ENCODE measurements at regions of chr3 and their contacts with region 1.

Region 1: DNA sequence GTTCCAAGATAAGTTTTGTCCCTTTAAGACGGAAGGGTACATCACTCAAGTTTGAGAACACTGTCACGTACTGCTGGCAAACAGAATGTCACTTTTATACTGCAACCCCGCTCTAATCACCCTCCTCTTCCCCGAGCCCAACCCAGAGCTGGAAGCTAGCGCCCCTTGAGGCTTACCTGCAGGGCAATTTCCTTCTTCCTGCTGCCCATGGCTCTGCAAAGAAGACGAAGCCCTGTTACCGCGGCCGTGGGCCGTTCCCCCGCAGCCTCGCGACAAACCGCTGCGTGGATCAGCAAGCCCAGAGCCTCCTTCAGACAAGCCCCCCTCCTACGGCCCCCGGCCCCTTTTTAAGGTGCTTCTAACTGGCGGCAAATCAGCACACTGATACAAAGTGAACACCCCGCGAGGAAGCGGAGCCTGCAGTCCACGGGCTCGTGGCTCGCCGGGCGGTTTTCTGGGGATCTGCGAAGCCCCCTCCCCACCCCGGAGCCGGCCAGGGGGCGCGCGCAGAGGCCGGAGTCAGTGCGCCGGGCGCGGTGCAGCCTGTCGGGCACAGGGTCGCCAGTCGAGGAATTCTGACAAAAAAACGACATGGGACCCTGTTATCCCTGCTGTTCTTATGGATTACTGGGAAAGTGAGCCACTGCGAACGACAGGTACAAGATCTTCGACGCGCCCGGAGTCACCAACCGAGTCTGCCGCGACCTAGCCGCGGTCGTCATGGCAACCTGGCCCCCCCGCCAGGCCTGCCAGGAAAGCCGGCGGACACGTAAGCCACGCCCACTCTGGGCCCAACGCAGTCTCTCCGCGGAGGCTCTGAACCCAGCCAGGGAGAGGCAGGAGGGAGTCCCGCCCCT is at the start of gene NME9:
- DNase-seq: peak; percentile 92 to 95 (median 95)
- H3K4me3 ChIP-seq: peak within 1 kb of the TSS; percentile 67 to 91 (median 79)
- H3K27ac ChIP-seq: peak within 1 kb of the TSS; percentile 1 to 63
- H3K4me1 ChIP-seq: peaks cover 5 to 20% (median 16%) of the 10 kb centered on the region in 4 experiments
- H3K27me3 ChIP-seq: no peaks in the 10 kb centered on the region

Region 2: GRCh38 chr3:138314751-138315150 is 14.6 kb before region 1 on chr3:
- CTCF ChIA-PET with region 1: interaction called, 10 read pairs
- POLR2A ChIA-PET with region 1: no interaction called
- DNase-seq: no peak
- H3K4me3 ChIP-seq: no peak overlapping the region
- H3K27ac ChIP-seq: no peak overlapping the region
- H3K4me1 ChIP-seq: no peaks in the 10 kb centered on the region
- H3K27me3 ChIP-seq: peaks cover 0 to 2% (median 0%) of the 10 kb centered on the region in 5 experiments

Region 3: GRCh38 chr3:138347960-138348753 is 18.8 kb after region 1 on chr3 and contains the start of gene MRAS:
- CTCF ChIA-PET with region 1: interaction called, 65 read pairs
- POLR2A ChIA-PET with region 1: interaction called, 3 read pairs
- DNase-seq: peak; percentile 61 to 76 (median 62)
- H3K4me3 ChIP-seq: peak within 1 kb of the TSS; percentile 60 to 90 (median 76)
- H3K27ac ChIP-seq: no peak within 1 kb of the TSS
- H3K4me1 ChIP-seq: peaks cover 0 to 10% (median 8%) of the 10 kb centered on the region in 4 experiments
- H3K27me3 ChIP-seq: peaks cover 0 to 14% (median 4%) of the 10 kb centered on the region in 5 experiments